Endothelial cell of umbilical vein (primary cell): ENCODE measurements at regions of chr6 and their contacts with region 1.

Region 1: GRCh38 chr6:87139236-87139635 is 16.1 kb upstream of the ZNF292 start:
- DNase-seq: peak; percentile 61
- H3K4me3 ChIP-seq: no peak overlapping the region
- H3K27ac ChIP-seq: no peak overlapping the region
- H3K4me1 ChIP-seq: no peaks in the 10 kb centered on the region
- H3K27me3 ChIP-seq: peaks cover 0 to 8% of the 10 kb centered on the region in 2 experiments
- CTCF ChIP-seq: peak; percentile 55 to 59
- POLR2A ChIP-seq: no peak

Region 2: DNA sequence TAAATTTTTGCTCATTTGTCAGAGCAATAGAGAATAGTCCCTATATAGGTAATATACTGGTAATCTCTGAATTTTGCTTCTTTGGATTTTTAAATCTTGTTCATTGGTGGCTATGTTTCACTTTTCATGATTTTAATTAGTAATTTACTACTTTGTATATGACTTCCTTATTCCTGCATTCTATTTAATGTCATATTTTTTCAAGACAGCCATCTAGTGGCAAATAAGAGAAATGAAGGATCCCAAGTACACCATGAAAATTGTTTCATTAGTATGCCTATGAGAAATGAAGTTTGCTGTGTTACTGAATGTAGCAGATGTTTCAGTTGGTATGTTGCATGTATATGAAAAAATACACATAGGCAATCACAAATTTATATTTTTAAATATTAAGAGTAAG is 98.6 kb after region 1 on chr6:
- CTCF ChIA-PET with region 1: interaction called, 7 read pairs
- POLR2A ChIA-PET with region 1: no interaction called
- dilution Hi-C with region 1: no loop called
- intact Hi-C with region 1: loop called (anchors 1 kb)
- DNase-seq: peak; percentile 30
- H3K4me3 ChIP-seq: no peak overlapping the region
- H3K27ac ChIP-seq: no peak overlapping the region
- H3K4me1 ChIP-seq: no peaks in the 10 kb centered on the region
- H3K27me3 ChIP-seq: no peaks in the 10 kb centered on the region
- CTCF ChIP-seq: peak; percentile 27 to 33
- POLR2A ChIP-seq: no peak